Endothelial cell of umbilical vein (primary cell): ENCODE measurements at regions of chr10 and their contacts with region 1.

Region 1: GRCh38 chr10:17409170-17409733 is 45.1 kb downstream of the ST8SIA6 start:
- DNase-seq: peak; percentile 61
- H3K4me3 ChIP-seq: no peak overlapping the region
- H3K27ac ChIP-seq: no peak overlapping the region
- H3K4me1 ChIP-seq: no peaks in the 10 kb centered on the region
- H3K27me3 ChIP-seq: no peaks in the 10 kb centered on the region
- CTCF ChIP-seq: peak; percentile 43 to 46
- POLR2A ChIP-seq: no peak

Region 2: GRCh38 chr10:17375936-17376584 is 33.2 kb before region 1 on chr10:
- CTCF ChIA-PET with region 1: interaction called, 10 read pairs
- POLR2A ChIA-PET with region 1: no interaction called
- dilution Hi-C with region 1: no loop called
- intact Hi-C with region 1: no loop called
- DNase-seq: peak; percentile 2
- H3K4me3 ChIP-seq: no peak overlapping the region
- H3K27ac ChIP-seq: no peak overlapping the region
- H3K4me1 ChIP-seq: no peaks in the 10 kb centered on the region
- H3K27me3 ChIP-seq: no peaks in the 10 kb centered on the region
- CTCF ChIP-seq: peak; percentile 41 to 71
- POLR2A ChIP-seq: no peak

Region 3: DNA sequence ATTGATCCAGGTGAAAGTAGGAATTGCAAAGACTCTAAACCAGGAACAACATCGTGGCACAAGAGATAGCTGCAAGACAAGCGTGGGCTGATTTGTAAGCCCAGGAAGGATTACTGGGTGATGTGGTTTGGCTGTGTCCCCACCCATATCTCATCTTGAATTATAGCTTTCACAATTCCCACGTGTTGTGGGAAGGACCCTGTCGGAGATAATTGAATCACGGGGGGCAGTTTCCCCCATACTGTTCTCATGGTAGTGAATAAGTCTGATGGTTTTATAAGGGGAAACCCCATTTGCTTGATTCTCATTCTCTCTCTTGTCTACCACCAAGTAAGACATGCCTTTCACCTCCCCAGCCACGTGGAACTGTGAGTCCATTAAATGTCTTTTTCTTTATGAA is 14.4 kb before region 1 on chr10:
- CTCF ChIA-PET with region 1: interaction called, 21 read pairs
- POLR2A ChIA-PET with region 1: no interaction called
- dilution Hi-C with region 1: no loop called
- intact Hi-C with region 1: no loop called
- DNase-seq: no peak
- H3K4me3 ChIP-seq: no peak overlapping the region
- H3K27ac ChIP-seq: no peak overlapping the region
- H3K4me1 ChIP-seq: no peaks in the 10 kb centered on the region
- H3K27me3 ChIP-seq: peaks cover 4 to 6% of the 10 kb centered on the region in 2 experiments
- CTCF ChIP-seq: no peak
- POLR2A ChIP-seq: no peak

Region 4: DNA sequence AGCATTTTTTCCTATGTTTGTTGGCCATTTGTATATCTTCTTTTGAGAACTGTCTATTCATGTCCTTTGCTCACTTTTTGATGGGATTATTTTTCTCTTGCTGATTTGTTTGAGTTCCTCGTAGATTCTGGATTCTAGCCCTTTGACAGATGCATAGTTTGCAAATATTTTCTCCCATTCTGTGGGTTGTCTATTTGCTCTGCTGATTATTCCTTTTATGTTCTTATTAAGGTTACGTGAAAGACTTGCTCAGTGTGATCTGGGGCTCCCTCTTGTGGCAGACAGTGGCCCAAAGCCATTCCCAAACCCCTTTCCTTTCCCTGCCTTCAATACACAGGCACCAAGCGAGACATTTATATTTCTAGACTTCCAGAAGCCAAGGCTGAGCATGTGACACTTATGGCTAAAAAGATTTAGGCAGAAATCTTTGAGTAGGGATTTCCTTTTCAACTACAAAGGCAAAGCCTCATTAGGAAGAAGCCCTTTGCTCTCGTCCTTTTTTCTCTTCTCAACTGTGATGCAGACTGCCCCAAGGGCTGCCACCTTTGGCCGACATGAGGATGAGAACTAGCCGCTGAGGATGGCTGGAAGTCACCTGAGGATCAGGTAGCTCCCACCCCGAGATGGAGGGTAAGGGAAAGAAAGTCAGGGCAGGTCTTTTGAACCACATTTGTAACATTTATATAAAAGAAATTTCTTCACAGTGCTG is 21.5 kb after region 1 on chr10:
- CTCF ChIA-PET with region 1: interaction called, 22 read pairs
- POLR2A ChIA-PET with region 1: no interaction called
- dilution Hi-C with region 1: no loop called
- intact Hi-C with region 1: no loop called
- DNase-seq: peak; percentile 87
- H3K4me3 ChIP-seq: no peak overlapping the region
- H3K27ac ChIP-seq: no peak overlapping the region
- H3K4me1 ChIP-seq: peaks cover 22% of the 10 kb centered on the region
- H3K27me3 ChIP-seq: no peaks in the 10 kb centered on the region
- CTCF ChIP-seq: peak; percentile 84 to 90
- POLR2A ChIP-seq: no peak

Region 5: GRCh38 chr10:17599089-17599488 is 189.8 kb after region 1 on chr10:
- CTCF ChIA-PET with region 1: interaction called, 40 read pairs
- POLR2A ChIA-PET with region 1: no interaction called
- dilution Hi-C with region 1: no loop called
- intact Hi-C with region 1: loop called (anchors 1 kb)
- DNase-seq: peak; percentile 63
- H3K4me3 ChIP-seq: no peak overlapping the region
- H3K27ac ChIP-seq: no peak overlapping the region
- H3K4me1 ChIP-seq: no peaks in the 10 kb centered on the region
- H3K27me3 ChIP-seq: no peaks in the 10 kb centered on the region
- CTCF ChIP-seq: peak; percentile 43 to 44
- POLR2A ChIP-seq: no peak

Region 6: GRCh38 chr10:17624996-17625395 is 215.7 kb after region 1 on chr10:
- CTCF ChIA-PET with region 1: no interaction called
- POLR2A ChIA-PET with region 1: no interaction called
- dilution Hi-C with region 1: no loop called
- intact Hi-C with region 1: no loop called
- DNase-seq: no peak
- H3K4me3 ChIP-seq: no peak overlapping the region
- H3K27ac ChIP-seq: no peak overlapping the region
- H3K4me1 ChIP-seq: no peaks in the 10 kb centered on the region
- H3K27me3 ChIP-seq: peaks cover 9 to 27% of the 10 kb centered on the region in 2 experiments
- CTCF ChIP-seq: no peak
- POLR2A ChIP-seq: no peak